ENCODE measurements at regions of chr5 and their contacts with region 1.

Region 1: DNA sequence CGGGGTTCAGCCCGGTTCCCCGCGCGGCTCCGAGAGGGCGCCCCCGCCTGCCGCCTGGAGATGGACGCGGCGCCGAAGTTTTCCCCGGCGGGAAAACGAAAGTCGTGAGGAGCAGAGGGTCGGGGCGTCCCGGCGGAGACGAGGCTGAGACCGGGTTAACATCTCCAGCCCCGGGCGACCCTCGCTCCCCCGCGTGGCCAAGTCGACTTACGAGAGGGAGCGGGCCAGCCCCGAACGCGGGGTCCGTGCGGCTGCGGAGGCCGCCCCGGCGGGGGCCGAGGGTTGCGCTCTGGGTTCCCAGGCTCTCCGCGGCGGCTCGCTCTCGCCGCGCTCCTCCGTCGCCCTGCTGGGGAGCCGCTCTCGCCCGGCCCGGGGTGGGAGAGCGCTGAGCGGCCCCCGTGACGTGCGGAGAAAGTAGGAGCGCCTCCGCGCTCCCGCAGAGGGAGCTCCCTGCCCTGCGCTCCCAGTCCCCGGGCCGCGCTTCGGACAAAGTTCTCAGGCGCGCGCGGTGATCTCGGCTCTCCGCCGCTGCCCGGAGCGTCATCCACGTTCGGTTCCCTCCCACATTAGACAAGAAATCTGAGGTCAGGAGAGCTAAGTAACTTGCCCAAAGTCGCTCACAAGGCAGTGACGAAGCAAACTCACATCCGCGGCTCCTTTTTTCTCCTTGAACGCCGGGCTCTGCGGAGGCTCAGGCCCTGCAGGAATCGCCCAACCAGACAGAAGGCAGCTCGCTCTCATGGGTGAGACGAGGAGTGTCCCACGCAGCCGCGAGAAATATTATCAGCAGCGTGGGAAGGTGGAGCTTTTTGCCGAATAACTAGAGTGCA is 1.2 kb upstream of the GCNT4 start:
- DNase-seq: no peak
- H3K4me3 ChIP-seq: peak overlapping the region; percentile 77 to 94 (median 84)
- H3K27ac ChIP-seq: peak overlapping the region; percentile 95 to 97 (median 96)
- H3K4me1 ChIP-seq: peaks cover 17 to 58% (median 53%) of the 10 kb centered on the region in 4 donors
- H3K27me3 ChIP-seq: no peaks in the 10 kb centered on the region
- CTCF ChIP-seq: peak in 2 of 3 experiments; percentile 17 to 23
- EP300 ChIP-seq: no peak
- POLR2A ChIP-seq: peak; percentile 21

Region 2: GRCh38 chr5:74673011-74673790 is 380.3 kb before region 1 on chr5:
- intact Hi-C with region 1: loop called (anchors 10 kb)
- DNase-seq: no peak
- H3K4me3 ChIP-seq: peak overlapping the region; percentile 40 to 54 (median 45)
- H3K27ac ChIP-seq: peak overlapping the region; percentile 48 to 67 (median 66)
- H3K4me1 ChIP-seq: peaks cover 14 to 18% (median 15%) of the 10 kb centered on the region in 4 donors
- H3K27me3 ChIP-seq: no peaks in the 10 kb centered on the region
- CTCF ChIP-seq: peak; percentile 47 to 59 (median 57)
- EP300 ChIP-seq: no peak
- POLR2A ChIP-seq: no peak

Region 3: GRCh38 chr5:74766849-74767578 is 286.5 kb before region 1 on chr5 and contains the starts of genes GFM2 and NSA2:
- intact Hi-C with region 1: loop called (anchors 5 kb)
- DNase-seq: peak; percentile 95
- H3K4me3 ChIP-seq: peak within 1 kb of the TSS; percentile 77 to 87 (median 81)
- H3K27ac ChIP-seq: peak within 1 kb of the TSS; percentile 77 to 87 (median 86)
- H3K4me1 ChIP-seq: peaks cover 24 to 34% (median 31%) of the 10 kb centered on the region in 4 donors
- H3K27me3 ChIP-seq: no peaks in the 10 kb centered on the region
- CTCF ChIP-seq: peak in 1 of 3 experiments; percentile 17
- EP300 ChIP-seq: no peak
- POLR2A ChIP-seq: no peak
- total RNA-seq, gene GFM2: 12.9 to 17.0 (median 14.5) TPM
- total RNA-seq, gene NSA2: 85.2 to 120 (median 110) TPM

Region 4: DNA sequence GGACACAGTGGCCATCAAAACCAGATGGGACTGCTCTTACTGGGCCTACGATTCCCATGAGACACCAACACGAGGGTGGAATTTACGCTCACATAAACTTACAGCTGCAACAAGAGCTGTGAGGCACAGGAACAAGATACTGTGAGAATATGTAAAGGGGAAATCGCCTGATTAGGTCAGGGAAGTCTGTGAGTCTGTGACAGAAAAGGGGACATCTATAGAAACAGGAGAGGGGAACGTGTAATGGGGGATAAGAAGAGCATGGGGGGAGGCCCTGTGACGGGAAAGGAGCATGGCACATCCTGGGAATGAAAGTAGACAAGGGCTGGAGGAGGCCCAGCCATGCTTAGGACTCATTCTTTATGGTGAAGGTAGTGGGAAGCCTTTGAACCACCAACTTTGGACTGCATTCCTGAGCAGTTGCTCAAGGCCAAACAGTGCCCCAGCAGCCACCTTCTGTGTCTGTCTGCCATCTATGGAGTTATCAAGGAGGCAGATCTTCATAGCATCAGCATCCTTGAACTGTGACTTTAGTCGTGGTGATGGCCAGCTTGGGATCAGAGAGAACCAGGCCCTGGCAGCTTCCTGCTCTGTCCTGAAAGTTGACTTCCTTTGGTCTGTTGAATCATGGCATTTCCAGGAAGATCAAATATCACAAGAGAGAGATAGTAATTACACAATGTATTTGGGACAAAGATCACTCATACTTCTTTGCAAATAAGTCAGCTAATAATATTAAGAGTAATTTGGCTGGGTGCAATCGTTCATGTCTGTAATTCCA is 99.4 kb before region 1 on chr5:
- intact Hi-C with region 1: loop called (anchors 5 kb)
- DNase-seq: no peak
- H3K4me3 ChIP-seq: no peak overlapping the region
- H3K27ac ChIP-seq: no peak overlapping the region
- H3K4me1 ChIP-seq: peaks cover 0 to 3% (median 2%) of the 10 kb centered on the region in 4 donors
- H3K27me3 ChIP-seq: no peaks in the 10 kb centered on the region
- CTCF ChIP-seq: no peak
- EP300 ChIP-seq: no peak
- POLR2A ChIP-seq: no peak

Region 5: DNA sequence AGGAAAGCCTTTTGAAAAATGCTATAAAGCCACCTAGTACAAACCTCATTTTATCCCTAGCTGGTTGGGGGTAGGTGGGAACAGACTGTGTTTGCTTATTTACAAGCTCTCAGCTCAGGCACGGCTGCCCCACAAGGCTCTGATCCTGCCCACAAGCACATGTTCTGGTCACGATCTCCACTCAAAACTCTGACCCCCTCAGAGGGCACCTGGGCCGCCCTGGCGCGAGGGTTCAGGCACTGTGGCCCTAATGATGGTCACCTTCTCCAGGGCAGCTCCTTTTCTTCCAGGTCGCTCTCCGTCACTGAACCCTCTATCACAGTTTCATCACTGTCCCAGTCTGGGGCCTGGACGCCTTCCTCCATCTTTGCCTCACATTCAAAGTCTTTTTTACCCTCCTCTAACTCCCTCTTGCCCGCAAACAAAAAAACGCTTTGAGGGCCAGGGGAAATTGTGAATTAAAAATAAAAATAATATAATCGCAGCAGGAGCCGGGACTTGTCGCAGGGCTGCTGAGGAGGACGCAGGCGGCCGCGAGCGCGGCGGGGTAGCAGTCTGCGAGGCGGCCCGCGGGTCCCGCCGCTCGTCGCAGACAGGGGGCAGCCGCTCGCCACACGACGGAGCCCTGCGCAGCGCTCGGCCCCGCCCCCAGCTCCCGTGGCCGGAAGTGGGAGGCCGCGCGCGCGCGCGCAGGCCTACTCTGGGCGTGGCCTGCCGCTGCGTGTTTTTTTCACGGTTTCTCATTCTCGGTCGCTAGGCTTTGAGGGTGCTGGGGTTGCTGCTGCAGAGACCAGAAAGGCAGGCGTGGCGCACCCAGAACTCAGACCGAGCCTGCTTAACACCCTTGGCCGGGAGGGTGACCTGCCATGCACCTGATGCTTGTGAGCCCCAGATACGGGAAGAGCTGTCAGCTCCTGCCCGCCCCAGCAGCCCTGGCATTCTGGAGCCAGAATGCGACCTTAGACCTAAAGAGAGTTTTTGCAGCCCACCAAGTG is 183.1 kb after region 1 on chr5 and contains the start of gene ANKRD31:
- intact Hi-C with region 1: loop called (anchors 5 kb)
- DNase-seq: no peak
- H3K4me3 ChIP-seq: peak within 1 kb of the TSS; percentile 65 to 75 (median 68)
- H3K27ac ChIP-seq: peak within 1 kb of the TSS; percentile 64 to 81 (median 75)
- H3K4me1 ChIP-seq: peaks cover 3 to 16% (median 12%) of the 10 kb centered on the region in 4 donors
- H3K27me3 ChIP-seq: no peaks in the 10 kb centered on the region
- CTCF ChIP-seq: peak; percentile 94 to 97 (median 97)
- EP300 ChIP-seq: no peak
- POLR2A ChIP-seq: no peak
- total RNA-seq, gene ANKRD31: under 0.01 to 0.11 (median 0.03) TPM

Region 6: GRCh38 chr5:75336625-75337339 is 283.3 kb after region 1 on chr5 and contains the start of gene HMGCR:
- intact Hi-C with region 1: loop called (anchors 5 kb)
- DNase-seq: peak; percentile 100
- H3K4me3 ChIP-seq: peak within 1 kb of the TSS; percentile 96 to 100 (median 96)
- H3K27ac ChIP-seq: peak within 1 kb of the TSS; percentile 91 to 97 (median 96)
- H3K4me1 ChIP-seq: peaks cover 13 to 23% (median 19%) of the 10 kb centered on the region in 4 donors
- H3K27me3 ChIP-seq: no peaks in the 10 kb centered on the region
- CTCF ChIP-seq: peak in 1 of 3 experiments; percentile 6
- EP300 ChIP-seq: no peak
- POLR2A ChIP-seq: no peak
- total RNA-seq, gene HMGCR: 9.6 to 17.4 (median 12.6) TPM

Region 7: GRCh38 chr5:75681125-75681830 is 627.8 kb after region 1 on chr5:
- intact Hi-C with region 1: loop called (anchors 10 kb)
- DNase-seq: no peak
- H3K4me3 ChIP-seq: peak overlapping the region in 1 of 4 donors; percentile 3
- H3K27ac ChIP-seq: peak overlapping the region; percentile 14 to 64 (median 30)
- H3K4me1 ChIP-seq: peaks cover 0 to 20% (median 12%) of the 10 kb centered on the region in 4 donors
- H3K27me3 ChIP-seq: no peaks in the 10 kb centered on the region
- CTCF ChIP-seq: peak; percentile 72 to 93 (median 80)
- EP300 ChIP-seq: no peak
- POLR2A ChIP-seq: no peak